Left cardiac atrium (tissue), 4 donors: ENCODE measurements at regions of chr3 and their contacts with region 1.

Region 1: DNA sequence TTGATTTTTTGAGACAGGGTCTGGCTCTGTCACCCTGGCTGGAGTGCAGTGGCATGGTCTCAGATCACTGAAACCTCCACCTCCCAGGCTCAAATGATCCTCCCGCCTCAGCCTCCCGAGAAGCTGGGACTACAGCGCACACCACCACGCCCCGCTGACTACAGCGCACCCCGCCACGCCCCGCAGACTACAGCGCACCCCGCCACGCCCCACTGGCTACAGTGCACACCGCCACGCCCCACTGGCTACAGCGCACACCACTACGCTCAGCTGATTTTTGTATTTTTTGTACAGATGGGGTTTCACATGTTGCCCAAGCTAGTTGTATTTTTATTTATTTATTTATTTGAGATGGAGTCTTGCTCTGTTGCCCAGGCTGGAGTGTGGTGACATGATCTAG is 35.6 kb downstream of the SLC51A start:
- DNase-seq: no peak
- ATAC-seq: no peak

Region 2: GRCh38 chr3:196202516-196202970 is 49.4 kb before region 1 on chr3:
- intact Hi-C with region 1: no loop called
- DNase-seq: peak; percentile 56
- ATAC-seq: peak; percentile 59 to 60

Region 3: GRCh38 chr3:196518966-196519717 is 267.2 kb after region 1 on chr3:
- intact Hi-C with region 1: loop called (anchors 2 to 10 kb)
- DNase-seq: peak; percentile 67
- ATAC-seq: peak; percentile 85 to 86

Region 4: GRCh38 chr3:196650740-196651311 is 398.9 kb after region 1 on chr3:
- intact Hi-C with region 1: no loop called
- DNase-seq: peak; percentile 77
- ATAC-seq: peak; percentile 93 to 99